ENCODE measurements at regions of chr2 and their contacts with region 1.

Region 1: DNA sequence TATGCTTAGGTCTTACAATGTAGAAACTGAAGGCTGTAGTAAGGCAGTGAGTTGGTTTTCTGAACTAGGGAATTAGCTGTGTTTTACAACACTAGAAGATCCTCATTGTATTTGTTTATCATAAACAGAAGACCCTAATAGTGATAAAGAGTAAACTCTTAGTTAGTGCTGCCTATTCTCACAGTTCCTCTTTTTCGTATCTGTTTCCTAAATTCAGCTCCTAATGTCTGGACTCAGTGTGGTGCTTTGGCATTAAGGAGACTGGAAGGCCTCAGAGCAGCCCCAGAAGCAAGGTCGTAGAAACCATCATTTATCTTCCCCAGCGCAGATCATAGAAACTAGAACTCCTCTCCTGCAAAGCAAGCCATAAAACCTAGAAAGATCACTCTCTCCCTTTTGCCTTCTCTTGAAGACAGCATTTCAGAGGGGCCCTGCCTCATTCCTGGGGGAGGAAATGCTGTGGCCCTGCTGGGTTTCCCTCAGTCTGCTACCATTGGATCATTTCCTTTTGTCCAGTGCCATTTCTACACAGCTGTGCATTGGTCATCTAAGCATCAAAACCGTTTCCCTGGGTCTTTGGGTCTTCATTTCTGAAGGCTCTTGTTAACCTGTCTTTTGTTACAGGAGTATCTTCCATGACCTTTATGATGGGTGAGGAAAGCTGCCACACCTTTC is 4.7 kb downstream of the ACP1 start:
- DNase-seq: no peak
- CTCF ChIP-seq: no peak

Region 2: DNA sequence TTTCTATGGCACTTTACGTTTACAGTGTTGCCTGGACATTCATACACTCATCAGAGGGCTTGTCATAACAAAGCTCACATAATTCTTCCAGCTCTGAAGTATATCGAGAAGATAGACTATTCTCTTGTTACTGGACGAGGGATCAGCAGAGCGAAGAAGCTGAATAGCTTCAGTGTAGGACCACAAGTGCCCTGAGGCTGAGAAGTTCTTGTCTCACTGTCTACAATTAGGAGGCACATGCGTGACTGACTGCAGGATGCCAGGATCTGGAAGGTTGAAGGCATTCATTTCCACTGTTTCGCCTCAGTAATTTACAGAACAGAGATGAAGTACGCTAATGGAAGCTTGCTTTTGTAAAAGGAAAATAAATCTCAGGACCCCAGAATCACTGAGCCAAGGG is 15.3 kb before region 1 on chr2:
- CTCF ChIA-PET with region 1: interaction called, 12 read pairs
- POLR2A ChIA-PET with region 1: no interaction called
- DNase-seq: no peak
- CTCF ChIP-seq: no peak